Posterior vena cava (tissue), 2 donors: ENCODE measurements at regions of chr6 and their contacts with region 1.

Region 1: GRCh38 chr6:90194371-90194841 is 102.2 kb downstream of the BACH2 start:
- DNase-seq: no peak

Region 2: DNA sequence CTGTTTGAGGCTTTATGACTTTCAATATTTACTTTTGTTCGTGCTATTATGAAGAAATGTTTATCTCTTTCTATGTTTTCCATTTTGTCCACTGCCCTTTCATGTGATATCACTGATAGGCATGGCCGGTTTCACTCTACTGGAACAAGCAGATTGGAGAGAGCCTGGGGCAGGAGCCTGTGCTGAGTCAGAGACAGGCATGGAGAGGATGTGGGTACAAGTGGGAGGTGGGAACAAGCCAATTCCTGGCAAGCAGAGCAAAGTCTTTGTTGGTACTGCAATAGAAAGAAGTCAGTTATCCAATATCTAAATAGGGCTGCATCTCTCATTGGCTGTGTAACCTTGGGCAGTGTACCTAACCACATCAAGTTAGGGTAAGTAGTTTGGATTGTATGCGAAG is 938.1 kb after region 1 on chr6:
- intact Hi-C with region 1: loop called in 1 of 2 experiments (anchors 5 kb)
- DNase-seq: no peak